ENCODE measurements at regions of chrX and their contacts with region 1.

Region 1: DNA sequence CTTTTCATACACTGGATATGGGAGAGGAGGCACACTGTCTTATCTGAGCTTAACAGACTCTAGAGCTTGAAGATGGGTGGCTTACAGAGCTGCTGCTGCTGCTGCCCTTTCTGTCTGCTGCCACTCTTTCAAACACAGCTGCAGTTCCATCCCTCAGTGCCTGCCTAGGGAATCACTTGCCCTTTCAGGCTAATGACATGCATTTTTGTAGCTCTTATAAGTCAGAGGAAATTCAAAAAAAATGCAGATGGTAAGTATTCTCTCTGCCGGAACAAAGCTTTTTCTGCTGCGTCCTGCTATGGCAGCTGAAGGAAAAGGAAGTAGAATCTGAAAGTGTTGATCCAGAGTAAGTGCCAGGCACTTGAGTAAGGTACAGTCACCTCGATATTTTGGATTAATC is 460.4 kb upstream of the DIAPH2 start:
- DNase-seq: no peak
- ATAC-seq: no peak
- H3K4me3 ChIP-seq: no peak overlapping the region
- H3K4me3 Mint-ChIP-seq: no peak overlapping the region
- H3K27ac ChIP-seq: no peak overlapping the region
- H3K27ac Mint-ChIP-seq: no peak overlapping the region
- H3K4me1 ChIP-seq: no peaks in the 10 kb centered on the region
- H3K4me1 Mint-ChIP-seq: no peaks in the 10 kb centered on the region
- H3K27me3 ChIP-seq: no peaks in the 10 kb centered on the region
- H3K27me3 Mint-ChIP-seq: no peaks in the 10 kb centered on the region
- CTCF ChIP-seq: no peak

Region 2: DNA sequence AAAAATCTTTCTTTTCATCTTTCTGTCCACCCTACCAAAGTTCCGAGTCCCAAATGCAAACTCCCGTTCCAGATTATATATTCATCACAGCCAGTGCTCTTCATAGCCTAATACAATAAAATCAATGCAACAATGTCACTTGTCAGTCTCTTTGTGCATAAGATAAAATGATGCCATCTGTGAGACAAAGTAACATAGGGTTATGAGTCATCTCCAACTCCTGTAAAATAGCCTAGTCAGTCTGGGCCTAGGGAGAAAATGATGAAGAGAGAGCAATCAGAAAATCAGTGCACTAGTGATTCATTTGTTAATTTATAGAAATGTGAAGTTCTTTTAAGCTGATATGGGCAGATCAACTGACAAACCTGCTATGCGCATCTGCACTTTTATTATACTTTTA is 228.7 kb before region 1 on chrX:
- CTCF ChIA-PET with region 1: no interaction called
- POLR2A ChIA-PET with region 1: no interaction called
- intact Hi-C with region 1: no loop called
- DNase-seq: no peak
- ATAC-seq: no peak
- H3K4me3 ChIP-seq: no peak overlapping the region
- H3K4me3 Mint-ChIP-seq: no peak overlapping the region
- H3K27ac ChIP-seq: no peak overlapping the region
- H3K27ac Mint-ChIP-seq: no peak overlapping the region
- H3K4me1 ChIP-seq: no peaks in the 10 kb centered on the region
- H3K4me1 Mint-ChIP-seq: no peaks in the 10 kb centered on the region
- H3K27me3 ChIP-seq: no peaks in the 10 kb centered on the region
- H3K27me3 Mint-ChIP-seq: no peaks in the 10 kb centered on the region
- CTCF ChIP-seq: no peak

Region 3: GRCh38 chrX:96176921-96177320 is 47.4 kb before region 1 on chrX:
- CTCF ChIA-PET with region 1: no interaction called
- POLR2A ChIA-PET with region 1: no interaction called
- intact Hi-C with region 1: loop called in 1 of 2 experiments (anchors 5 kb)
- DNase-seq: no peak
- ATAC-seq: no peak
- H3K4me3 ChIP-seq: no peak overlapping the region
- H3K4me3 Mint-ChIP-seq: no peak overlapping the region
- H3K27ac ChIP-seq: no peak overlapping the region
- H3K27ac Mint-ChIP-seq: no peak overlapping the region
- H3K4me1 ChIP-seq: no peaks in the 10 kb centered on the region
- H3K4me1 Mint-ChIP-seq: no peaks in the 10 kb centered on the region
- H3K27me3 ChIP-seq: no peaks in the 10 kb centered on the region
- H3K27me3 Mint-ChIP-seq: no peaks in the 10 kb centered on the region
- CTCF ChIP-seq: no peak